Right ventricle myocardium inferior (tissue), 1 donor: ENCODE measurements at regions of chr20 and their contacts with region 1.

Region 1: DNA sequence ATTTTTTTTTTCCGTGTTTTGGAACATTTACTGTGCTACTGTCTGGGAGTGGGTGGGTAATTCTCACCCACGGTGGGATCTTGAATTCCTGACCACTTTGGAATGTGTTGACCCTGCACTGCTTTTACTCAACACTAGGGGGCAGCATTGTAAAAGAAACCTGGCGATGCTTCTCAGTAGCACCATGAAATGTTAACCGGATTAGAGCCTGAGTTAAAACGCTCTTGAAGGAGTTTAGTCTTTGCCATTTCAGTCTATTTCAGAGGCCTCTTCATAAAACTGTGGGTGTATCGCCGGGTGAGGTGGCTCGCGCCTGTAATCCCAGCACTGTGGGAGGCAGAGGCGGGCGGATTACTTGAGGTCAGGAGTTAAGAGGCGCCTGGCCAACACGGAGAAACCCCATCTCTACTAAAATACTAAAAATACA is 114.4 kb upstream of the PRND start:
- DNase-seq: no peak
- ATAC-seq: peak; percentile 69

Region 2: DNA sequence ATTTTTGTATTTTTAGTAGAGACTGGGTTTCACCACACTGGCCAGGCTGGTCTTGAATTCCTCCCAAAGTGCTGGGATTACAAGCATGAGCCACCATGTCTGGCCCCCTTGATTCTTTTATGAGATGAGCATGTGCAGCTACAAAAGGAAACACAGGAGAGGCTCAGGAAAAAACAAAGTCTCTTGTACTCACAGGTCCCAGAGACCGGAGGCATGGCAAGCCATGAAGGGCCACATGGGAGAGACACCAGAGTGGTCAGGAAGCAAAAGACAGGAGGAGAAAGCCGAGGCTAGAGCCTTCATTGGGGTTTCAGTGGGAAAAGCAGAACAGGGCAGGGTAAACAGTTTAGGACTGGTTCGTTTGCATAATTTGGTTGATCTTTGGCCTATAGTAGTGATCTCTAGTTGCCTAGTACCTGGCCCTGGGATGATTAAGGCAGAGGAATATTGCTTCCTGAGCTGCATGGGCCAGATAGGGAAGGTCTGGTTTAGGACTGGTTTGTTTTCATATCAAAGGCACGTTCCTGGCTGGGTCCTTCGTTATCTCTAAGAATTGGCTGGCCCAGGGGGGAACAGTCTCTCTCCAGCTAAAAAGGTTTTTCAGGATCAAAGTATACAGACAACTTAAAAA is 66.2 kb after region 1 on chr20:
- intact Hi-C with region 1: loop called (anchors 5 kb)
- DNase-seq: no peak
- ATAC-seq: no peak

Region 3: DNA sequence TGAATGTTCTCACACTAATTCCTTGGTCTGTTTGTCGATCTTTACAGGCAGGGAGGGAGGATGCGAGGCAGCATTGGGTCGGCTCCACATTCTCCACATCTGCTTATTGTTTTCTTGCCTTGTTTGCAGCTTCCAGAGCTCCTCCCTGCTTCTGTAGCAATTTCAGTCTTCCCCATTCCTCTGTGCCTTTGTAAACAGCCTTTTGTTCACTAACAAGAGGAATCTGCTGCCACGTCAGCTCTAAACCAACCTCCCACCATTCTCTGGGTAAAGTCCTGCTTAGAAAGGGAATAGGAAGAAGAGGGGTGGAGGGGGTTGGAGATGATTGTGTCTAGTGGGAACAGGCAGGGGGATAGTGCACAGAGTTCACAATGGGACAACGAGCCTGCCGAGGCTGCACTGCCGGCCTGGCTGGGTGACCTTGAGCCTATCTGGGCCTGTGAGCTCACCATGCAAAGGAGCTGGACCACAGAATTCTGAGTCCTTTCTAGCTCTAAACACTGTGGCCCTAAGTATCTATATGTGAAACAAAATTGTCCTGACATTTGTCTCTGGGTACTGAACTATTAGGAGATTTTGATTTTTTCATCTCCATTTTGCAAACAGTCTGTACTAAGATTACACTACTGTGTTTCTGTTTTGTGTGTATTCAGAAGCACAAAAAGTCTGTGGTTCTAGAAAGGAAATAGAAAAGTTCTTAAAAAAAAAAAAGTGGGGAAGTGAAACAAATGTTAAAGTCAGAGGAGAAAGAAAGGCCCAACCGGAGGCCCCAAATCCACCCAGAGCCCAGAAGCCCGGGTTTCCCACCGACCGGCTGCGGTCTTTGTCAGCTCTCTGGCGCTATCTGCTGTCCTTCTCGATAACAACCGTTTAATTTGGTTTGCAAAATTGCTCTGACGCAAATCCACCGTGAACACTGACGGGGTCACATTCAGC is 113.0 kb after region 1 on chr20:
- intact Hi-C with region 1: loop called (anchors 1 kb)
- DNase-seq: peak; percentile 84
- ATAC-seq: peak; percentile 85

Region 4: GRCh38 chr20:4956200-4956810 is 349.0 kb after region 1 on chr20:
- intact Hi-C with region 1: loop called (anchors 10 kb)
- DNase-seq: no peak
- ATAC-seq: no peak